ENCODE measurements at regions of chr16 and their contacts with region 1.

Region 1: DNA sequence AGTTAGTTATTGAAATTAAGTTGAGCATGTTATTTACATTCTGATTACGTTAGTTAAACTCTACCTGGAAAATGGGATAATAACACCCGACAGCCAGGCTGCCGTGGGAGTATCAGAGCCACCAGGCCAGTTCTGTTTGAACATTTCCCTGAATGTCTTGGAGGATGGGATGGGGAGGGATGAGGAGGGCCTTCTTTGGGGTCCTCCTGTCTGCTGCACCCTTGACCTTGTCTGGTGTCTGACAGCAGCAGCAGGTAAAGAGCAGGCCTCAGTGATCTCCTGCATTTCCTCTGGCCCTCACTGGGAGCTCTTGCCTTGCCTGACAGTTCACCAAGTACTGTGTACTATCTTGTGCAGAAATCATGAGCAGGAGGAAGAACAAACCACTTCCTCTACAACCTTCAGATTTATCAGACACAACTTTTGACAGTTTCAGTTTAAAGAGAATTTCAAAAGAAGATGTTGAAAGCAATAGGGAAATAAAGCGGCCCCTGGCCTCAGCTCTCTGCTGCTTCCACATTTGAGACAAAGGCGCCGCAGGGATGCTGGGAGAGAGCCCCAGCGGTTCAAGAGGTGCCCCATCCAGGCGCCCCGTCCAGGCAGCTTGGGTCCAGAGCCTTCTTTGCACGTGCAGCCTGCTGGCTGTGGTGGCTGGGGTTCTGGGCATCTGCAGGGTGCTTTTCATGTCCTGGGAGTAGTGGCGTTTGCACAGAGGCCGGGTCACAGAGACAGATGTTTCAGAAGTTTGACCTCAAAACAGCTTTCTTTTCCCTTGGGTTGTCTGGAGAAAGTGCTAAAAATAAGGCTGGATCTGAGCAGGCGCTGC is 25.3 kb downstream of the CMIP start:
- DNase-seq: peak; percentile 48
- H3K4me3 Mint-ChIP-seq: peak overlapping the region; percentile 68
- H3K27ac Mint-ChIP-seq: peak overlapping the region; percentile 84
- H3K4me1 Mint-ChIP-seq: peaks cover 59% of the 10 kb centered on the region
- H3K27me3 Mint-ChIP-seq: no peaks in the 10 kb centered on the region

Region 2: GRCh38 chr16:81444448-81445121 is 25.3 kb before region 1 on chr16 and contains the start of gene CMIP:
- intact Hi-C with region 1: loop called (anchors 1 kb)
- DNase-seq: peak; percentile 77
- H3K4me3 Mint-ChIP-seq: peak within 1 kb of the TSS; percentile 90
- H3K27ac Mint-ChIP-seq: peak within 1 kb of the TSS; percentile 83
- H3K4me1 Mint-ChIP-seq: peaks cover 38% of the 10 kb centered on the region
- H3K27me3 Mint-ChIP-seq: peaks cover 29% of the 10 kb centered on the region
- total RNA-seq, gene CMIP: 68.0 and 76.9 TPM in 2 replicates

Measured in activated T-helper 2 cell treated with anti-CD3 and anti-CD28 coated beads, Interferon-gamma antibody, Interleukin-2, Interleukin-4, amounts not matched to agents 10 μg/mL and 5 μg/mL and 100 μg/mL, durations not matched to agents 14 hours and 24 hours and 36 hours (primary cell).